ENCODE measurements at regions of chr16 and their contacts with region 1.

Region 1: GRCh38 chr16:79580453-79581191 is 19.9 kb downstream of the MAF start:
- DNase-seq: no peak
- ATAC-seq: no peak
- H3K4me3 ChIP-seq: no peak overlapping the region
- H3K27ac ChIP-seq: no peak overlapping the region
- H3K4me1 ChIP-seq: no peaks in the 10 kb centered on the region
- H3K27me3 ChIP-seq: peaks cover 5% of the 10 kb centered on the region
- CTCF ChIP-seq: no peak

Region 2: DNA sequence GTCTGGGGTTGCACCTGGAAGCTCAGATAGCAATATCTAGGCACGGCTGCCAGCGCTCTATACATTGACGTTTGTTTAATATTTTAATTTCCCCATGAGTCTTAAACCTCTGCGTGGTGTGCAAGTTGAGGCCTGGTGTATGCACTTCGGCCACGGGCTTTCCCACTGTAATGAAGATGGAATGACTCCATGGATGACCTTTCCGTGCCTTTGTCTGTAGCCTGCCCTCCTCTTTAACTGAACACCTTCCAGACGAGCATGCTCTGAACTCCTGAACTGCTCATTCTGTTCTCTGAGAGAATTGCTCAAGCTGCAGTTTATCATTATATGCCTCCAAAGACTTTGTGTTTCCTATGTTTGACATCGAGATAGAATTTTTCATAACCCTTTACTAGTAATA is 1042.3 kb before region 1 on chr16:
- CTCF ChIA-PET with region 1: no interaction called
- POLR2A ChIA-PET with region 1: interaction called, 16 read pairs
- in situ Hi-C with region 1: no loop called
- intact Hi-C with region 1: no loop called
- DNase-seq: no peak
- ATAC-seq: no peak
- H3K4me3 ChIP-seq: no peak overlapping the region
- H3K27ac ChIP-seq: no peak overlapping the region
- H3K4me1 ChIP-seq: no peaks in the 10 kb centered on the region
- H3K27me3 ChIP-seq: no peaks in the 10 kb centered on the region
- CTCF ChIP-seq: no peak